ENCODE measurements at regions of chr3 and their contacts with region 1.

Region 1: DNA sequence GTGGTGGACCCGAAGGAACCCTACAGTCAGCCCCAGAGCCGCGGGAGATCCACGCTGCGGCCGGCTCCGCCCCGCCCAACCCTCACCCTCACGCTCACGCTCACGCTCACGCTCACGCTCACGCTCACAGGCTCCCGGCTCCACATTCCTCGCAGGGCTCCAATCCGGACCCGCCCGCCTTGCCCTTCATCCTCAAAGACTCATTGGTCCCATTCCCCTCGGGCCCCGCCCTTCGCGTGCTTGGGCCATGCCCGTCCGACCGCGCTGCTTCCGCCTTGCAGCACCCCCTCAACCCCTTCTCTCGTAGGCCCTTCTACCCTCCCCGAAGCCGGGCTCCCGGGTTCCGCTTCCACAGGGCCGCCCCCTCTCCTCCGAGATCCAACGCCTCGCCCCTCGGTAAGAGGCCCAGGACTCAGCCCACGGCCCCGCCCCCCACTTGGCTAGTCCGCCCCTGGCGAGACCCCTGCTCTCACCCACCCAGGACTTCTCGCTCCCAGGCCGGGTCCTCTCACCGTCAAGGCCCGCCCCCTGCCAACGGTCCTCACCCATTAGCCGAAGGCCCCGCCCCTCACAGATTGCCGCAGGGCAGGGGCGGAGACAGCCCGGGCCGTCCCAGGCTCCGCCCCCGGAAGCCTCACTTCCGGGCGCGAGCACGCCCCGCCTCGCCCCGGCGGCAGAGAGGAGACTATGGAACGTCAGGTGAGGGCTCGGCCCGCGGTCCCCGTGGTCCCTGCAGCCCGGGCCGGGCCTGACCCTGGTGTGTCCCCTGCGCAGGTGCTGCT is at the start of gene APEH:
- DNase-seq: peak; percentile 94 to 99 (median 98)
- ATAC-seq: peak; percentile 93
- H3K4me3 ChIP-seq: peak within 1 kb of the TSS; percentile 79
- H3K4me3 Mint-ChIP-seq: peak within 1 kb of the TSS; percentile 90 to 97 (median 94)
- H3K27ac ChIP-seq: peak within 1 kb of the TSS; percentile 94
- H3K27ac Mint-ChIP-seq: peak within 1 kb of the TSS; percentile 93 to 99 (median 96)
- H3K4me1 ChIP-seq: peaks cover 16 to 31% of the 10 kb centered on the region in 2 donors
- H3K4me1 Mint-ChIP-seq: peaks cover 15 to 57% (median 38%) of the 10 kb centered on the region in 7 donors
- H3K27me3 ChIP-seq: no peaks in the 10 kb centered on the region
- H3K27me3 Mint-ChIP-seq: no peaks in the 10 kb centered on the region
- total RNA-seq, gene APEH: 75.5 to 151 (median 99.1) TPM

Region 2: GRCh38 chr3:49171119-49171774 is 502.7 kb before region 1 on chr3 and contains the start of gene KLHDC8B:
- CTCF ChIA-PET with region 1: no interaction called
- POLR2A ChIA-PET with region 1: no interaction called
- intact Hi-C with region 1: loop called in 1 of 2 experiments (anchors 5 kb)
- DNase-seq: peak; percentile 65 to 89 (median 76)
- ATAC-seq: peak; percentile 88
- H3K4me3 ChIP-seq: peak within 1 kb of the TSS; percentile 95
- H3K4me3 Mint-ChIP-seq: peak within 1 kb of the TSS; percentile 83 to 94 (median 88)
- H3K27ac ChIP-seq: peak within 1 kb of the TSS; percentile 58
- H3K27ac Mint-ChIP-seq: peak within 1 kb of the TSS; percentile 61 to 92 (median 78)
- H3K4me1 ChIP-seq: peaks cover 11 to 26% of the 10 kb centered on the region in 2 donors
- H3K4me1 Mint-ChIP-seq: peaks cover 8 to 40% (median 26%) of the 10 kb centered on the region in 7 donors
- H3K27me3 ChIP-seq: no peaks in the 10 kb centered on the region
- H3K27me3 Mint-ChIP-seq: no peaks in the 10 kb centered on the region
- total RNA-seq, gene KLHDC8B: 1.5 to 7.1 (median 5.2) TPM

Region 3: GRCh38 chr3:49469936-49470713 is 203.8 kb before region 1 on chr3 and contains the start of gene DAG1:
- CTCF ChIA-PET with region 1: no interaction called
- POLR2A ChIA-PET with region 1: no interaction called
- intact Hi-C with region 1: loop called (anchors 1 kb)
- DNase-seq: peak; percentile 90 to 98 (median 95)
- ATAC-seq: peak; percentile 91
- H3K4me3 ChIP-seq: peak within 1 kb of the TSS; percentile 92
- H3K4me3 Mint-ChIP-seq: peak within 1 kb of the TSS; percentile 87 to 97 (median 92)
- H3K27ac ChIP-seq: peak within 1 kb of the TSS; percentile 94
- H3K27ac Mint-ChIP-seq: peak within 1 kb of the TSS; percentile 89 to 95 (median 93)
- H3K4me1 ChIP-seq: peaks cover 15 to 20% of the 10 kb centered on the region in 2 donors
- H3K4me1 Mint-ChIP-seq: peaks cover 14 to 27% (median 22%) of the 10 kb centered on the region in 7 donors
- H3K27me3 ChIP-seq: no peaks in the 10 kb centered on the region
- H3K27me3 Mint-ChIP-seq: no peaks in the 10 kb centered on the region
- total RNA-seq, gene DAG1: 12.0 to 22.3 (median 20.1) TPM

Region 4: GRCh38 chr3:49602877-49603411 is 71.0 kb before region 1 on chr3:
- CTCF ChIA-PET with region 1: no interaction called
- POLR2A ChIA-PET with region 1: no interaction called
- intact Hi-C with region 1: loop called in 1 of 2 experiments (anchors 1 kb)
- DNase-seq: peak in 7 of 9 donors; percentile 20 to 41 (median 31)
- ATAC-seq: peak; percentile 87
- H3K4me3 ChIP-seq: no peak overlapping the region
- H3K4me3 Mint-ChIP-seq: peak overlapping the region in 2 of 10 donors; percentile 18 to 49
- H3K27ac ChIP-seq: peak overlapping the region; percentile 22
- H3K27ac Mint-ChIP-seq: peak overlapping the region; percentile 40 to 87 (median 79)
- H3K4me1 ChIP-seq: peaks cover 11 to 12% of the 10 kb centered on the region in 2 donors
- H3K4me1 Mint-ChIP-seq: peaks cover 12 to 19% (median 19%) of the 10 kb centered on the region in 7 donors
- H3K27me3 ChIP-seq: no peaks in the 10 kb centered on the region
- H3K27me3 Mint-ChIP-seq: no peaks in the 10 kb centered on the region

Region 5: GRCh38 chr3:49839193-49839809 is 165.4 kb after region 1 on chr3:
- CTCF ChIA-PET with region 1: no interaction called
- POLR2A ChIA-PET with region 1: no interaction called
- intact Hi-C with region 1: loop called in 1 of 2 experiments (anchors 1 kb)
- DNase-seq: peak; percentile 64 to 84 (median 75)
- ATAC-seq: peak; percentile 97
- H3K4me3 ChIP-seq: no peak overlapping the region
- H3K4me3 Mint-ChIP-seq: no peak overlapping the region
- H3K27ac ChIP-seq: no peak overlapping the region
- H3K27ac Mint-ChIP-seq: peak overlapping the region in 1 of 9 donors; percentile 3
- H3K4me1 ChIP-seq: no peaks in the 10 kb centered on the region
- H3K4me1 Mint-ChIP-seq: peaks cover 0 to 9% (median 0%) of the 10 kb centered on the region in 7 donors
- H3K27me3 ChIP-seq: no peaks in the 10 kb centered on the region
- H3K27me3 Mint-ChIP-seq: no peaks in the 10 kb centered on the region

Region 6: DNA sequence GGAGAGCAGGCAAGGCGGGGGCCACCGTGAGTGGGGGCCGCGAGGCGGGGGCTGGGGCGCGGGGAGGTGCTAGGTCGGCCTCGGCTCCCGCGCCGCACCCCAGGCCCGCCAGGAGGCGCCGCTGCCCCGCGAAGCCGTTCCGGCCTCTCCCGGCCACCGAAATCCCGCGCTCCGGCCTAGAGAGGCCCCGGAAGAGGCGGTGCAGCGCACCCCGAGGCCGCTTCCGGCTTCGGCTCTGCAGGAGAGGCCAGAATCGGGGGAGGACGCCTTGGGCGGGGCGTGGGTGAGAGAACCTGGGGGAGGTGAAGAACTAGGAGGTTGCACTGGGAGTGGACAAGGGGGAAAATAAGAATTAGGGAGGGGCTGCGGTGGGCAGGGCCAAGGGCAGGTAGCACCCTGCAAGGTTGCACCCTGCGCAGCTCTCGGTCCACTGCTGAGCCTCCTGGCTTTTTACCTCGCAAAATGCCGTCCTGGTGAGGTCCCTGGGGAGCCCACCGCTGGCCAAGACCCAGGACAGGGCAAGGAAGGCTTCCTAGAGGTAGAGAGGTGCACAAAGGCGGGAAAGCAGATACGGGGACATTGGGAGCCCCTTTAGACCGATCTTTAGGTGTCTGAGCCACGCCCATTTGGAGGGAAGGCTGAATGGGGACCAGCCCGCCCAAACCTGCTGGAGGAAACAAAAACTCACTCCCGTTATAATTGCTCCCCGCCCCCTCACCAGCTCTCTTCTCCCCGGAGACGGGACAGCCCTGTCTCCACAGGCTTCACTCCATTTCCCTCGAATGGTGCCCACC is 553.7 kb after region 1 on chr3:
- CTCF ChIA-PET with region 1: no interaction called
- POLR2A ChIA-PET with region 1: no interaction called
- intact Hi-C with region 1: loop called in 1 of 2 experiments (anchors 5 kb)
- DNase-seq: peak; percentile 86 to 96 (median 91)
- ATAC-seq: peak; percentile 91
- H3K4me3 ChIP-seq: peak overlapping the region; percentile 88
- H3K4me3 Mint-ChIP-seq: peak overlapping the region; percentile 89 to 98 (median 96)
- H3K27ac ChIP-seq: peak overlapping the region; percentile 77
- H3K27ac Mint-ChIP-seq: peak overlapping the region; percentile 86 to 97 (median 93)
- H3K4me1 ChIP-seq: peaks cover 9 to 12% of the 10 kb centered on the region in 2 donors
- H3K4me1 Mint-ChIP-seq: peaks cover 16 to 36% (median 34%) of the 10 kb centered on the region in 7 donors
- H3K27me3 ChIP-seq: no peaks in the 10 kb centered on the region
- H3K27me3 Mint-ChIP-seq: peaks cover 0 to 17% (median 0%) of the 10 kb centered on the region in 5 donors